Naive thymus-derived CD4-positive, alpha-beta T cell (primary cell): ENCODE measurements at regions of chr11 and their contacts with region 1.

Region 1: GRCh38 chr11:64778508-64779346 is at the start of gene SF1:
- DNase-seq: peak; percentile 86 to 100 (median 100)
- ATAC-seq: peak; percentile 89
- H3K4me3 ChIP-seq: peak within 1 kb of the TSS; percentile 94
- H3K4me3 Mint-ChIP-seq: peak within 1 kb of the TSS; percentile 90 to 97 (median 94)
- H3K27ac ChIP-seq: peak within 1 kb of the TSS; percentile 99
- H3K27ac Mint-ChIP-seq: peak within 1 kb of the TSS; percentile 98 to 100 (median 99)
- H3K4me1 ChIP-seq: peaks cover 48 to 52% of the 10 kb centered on the region in 2 donors
- H3K4me1 Mint-ChIP-seq: peaks cover 51 to 71% (median 64%) of the 10 kb centered on the region in 7 donors
- H3K27me3 ChIP-seq: no peaks in the 10 kb centered on the region
- H3K27me3 Mint-ChIP-seq: peaks cover 0 to 5% (median 0%) of the 10 kb centered on the region in 5 donors
- total RNA-seq, gene SF1: 462 to 1,612 (median 904) TPM

Region 2: DNA sequence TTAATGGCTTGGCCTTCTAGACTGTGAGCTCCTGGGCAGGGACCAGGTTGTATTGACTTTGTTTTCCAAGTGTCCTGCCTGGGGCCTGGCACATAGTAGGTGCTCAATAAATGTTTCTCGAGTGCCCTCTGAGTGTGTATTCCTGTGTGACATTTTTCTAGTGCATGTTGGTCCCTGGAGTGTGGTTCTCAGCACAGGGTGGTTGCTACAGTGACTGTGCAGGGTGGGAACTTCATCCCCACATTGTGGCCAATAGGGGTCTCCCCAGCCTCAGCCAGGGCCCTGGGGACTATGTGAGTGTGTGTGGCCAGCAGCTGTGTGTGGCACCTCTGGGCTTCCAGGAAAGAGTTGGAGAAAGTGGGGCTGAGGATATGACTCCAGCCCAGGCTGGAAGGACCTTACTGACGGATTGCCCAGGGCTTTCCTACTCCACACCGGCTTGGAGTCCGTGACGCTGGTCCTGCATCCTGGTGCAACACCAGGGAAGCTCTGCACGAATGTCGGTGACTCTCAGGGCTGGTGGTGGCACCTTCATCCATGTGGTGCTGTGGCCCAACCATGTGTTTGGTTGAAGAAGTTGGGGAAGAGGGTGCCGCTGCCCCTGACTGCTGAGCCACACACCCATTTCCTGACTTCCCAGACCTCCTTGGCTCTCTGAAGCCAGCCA is 948.8 kb before region 1 on chr11:
- CTCF ChIA-PET with region 1: no interaction called
- POLR2A ChIA-PET with region 1: no interaction called
- intact Hi-C with region 1: no loop called
- DNase-seq: no peak
- ATAC-seq: no peak
- H3K4me3 ChIP-seq: no peak overlapping the region
- H3K4me3 Mint-ChIP-seq: no peak overlapping the region
- H3K27ac ChIP-seq: no peak overlapping the region
- H3K27ac Mint-ChIP-seq: no peak overlapping the region
- H3K4me1 ChIP-seq: no peaks in the 10 kb centered on the region
- H3K4me1 Mint-ChIP-seq: peaks cover 0 to 6% (median 0%) of the 10 kb centered on the region in 7 donors
- H3K27me3 ChIP-seq: no peaks in the 10 kb centered on the region
- H3K27me3 Mint-ChIP-seq: no peaks in the 10 kb centered on the region

Region 3: DNA sequence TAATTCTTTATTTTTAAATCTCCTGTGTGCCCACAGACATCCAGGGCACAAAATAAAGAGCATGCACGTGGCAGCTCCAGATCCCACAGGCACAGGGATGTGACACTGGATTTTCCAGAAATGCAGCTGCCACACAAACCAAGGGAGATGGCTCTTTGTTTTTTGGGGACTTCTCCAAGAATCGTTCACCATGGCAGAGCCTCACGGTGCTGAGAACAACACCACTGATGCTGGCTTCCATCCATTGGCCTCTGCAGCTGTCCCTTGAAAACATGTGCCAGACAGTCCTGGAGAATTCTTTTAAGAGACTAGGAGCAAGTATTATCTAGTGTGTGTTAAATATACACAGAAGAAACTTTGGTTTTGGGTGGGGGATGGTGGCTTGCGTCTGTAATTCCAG is 296.1 kb before region 1 on chr11:
- CTCF ChIA-PET with region 1: no interaction called
- POLR2A ChIA-PET with region 1: no interaction called
- intact Hi-C with region 1: no loop called
- DNase-seq: no peak
- ATAC-seq: no peak
- H3K4me3 ChIP-seq: no peak overlapping the region
- H3K4me3 Mint-ChIP-seq: no peak overlapping the region
- H3K27ac ChIP-seq: no peak overlapping the region
- H3K27ac Mint-ChIP-seq: no peak overlapping the region
- H3K4me1 ChIP-seq: no peaks in the 10 kb centered on the region
- H3K4me1 Mint-ChIP-seq: no peaks in the 10 kb centered on the region
- H3K27me3 ChIP-seq: no peaks in the 10 kb centered on the region
- H3K27me3 Mint-ChIP-seq: peaks cover 9 to 25% (median 22%) of the 10 kb centered on the region in 5 donors

Region 4: GRCh38 chr11:64593156-64594105 is 185.3 kb before region 1 on chr11:
- CTCF ChIA-PET with region 1: no interaction called
- POLR2A ChIA-PET with region 1: no interaction called
- intact Hi-C with region 1: no loop called
- DNase-seq: no peak
- ATAC-seq: no peak
- H3K4me3 ChIP-seq: no peak overlapping the region
- H3K4me3 Mint-ChIP-seq: no peak overlapping the region
- H3K27ac ChIP-seq: no peak overlapping the region
- H3K27ac Mint-ChIP-seq: no peak overlapping the region
- H3K4me1 ChIP-seq: no peaks in the 10 kb centered on the region
- H3K4me1 Mint-ChIP-seq: no peaks in the 10 kb centered on the region
- H3K27me3 ChIP-seq: no peaks in the 10 kb centered on the region
- H3K27me3 Mint-ChIP-seq: peaks cover 0 to 5% (median 3%) of the 10 kb centered on the region in 5 donors

Region 5: GRCh38 chr11:64742889-64743590 is 35.7 kb before region 1 on chr11:
- CTCF ChIA-PET with region 1: interaction called, 305 read pairs
- POLR2A ChIA-PET with region 1: interaction called, 1,956 read pairs
- intact Hi-C with region 1: loop called (anchors 1 kb)
- DNase-seq: peak; percentile 60 to 91 (median 78)
- ATAC-seq: peak; percentile 45
- H3K4me3 ChIP-seq: peak overlapping the region; percentile 98
- H3K4me3 Mint-ChIP-seq: peak overlapping the region in 9 of 10 donors; percentile 89 to 99 (median 97)
- H3K27ac ChIP-seq: peak overlapping the region; percentile 97
- H3K27ac Mint-ChIP-seq: peak overlapping the region in 5 of 9 donors; percentile 88 to 100 (median 98)
- H3K4me1 ChIP-seq: peaks cover 9 to 16% of the 10 kb centered on the region in 2 donors
- H3K4me1 Mint-ChIP-seq: peaks cover 18 to 47% (median 39%) of the 10 kb centered on the region in 7 donors
- H3K27me3 ChIP-seq: no peaks in the 10 kb centered on the region
- H3K27me3 Mint-ChIP-seq: no peaks in the 10 kb centered on the region

Region 6: GRCh38 chr11:64803163-64803845 is 24.6 kb after region 1 on chr11 and contains the start of gene MAP4K2:
- CTCF ChIA-PET with region 1: interaction called, 4 read pairs
- POLR2A ChIA-PET with region 1: interaction called, 125 read pairs
- intact Hi-C with region 1: loop called (anchors 1 kb)
- DNase-seq: peak; percentile 80 to 96 (median 87)
- ATAC-seq: peak; percentile 98
- H3K4me3 ChIP-seq: peak within 1 kb of the TSS; percentile 91
- H3K4me3 Mint-ChIP-seq: peak within 1 kb of the TSS; percentile 85 to 92 (median 88)
- H3K27ac ChIP-seq: peak within 1 kb of the TSS; percentile 98
- H3K27ac Mint-ChIP-seq: peak within 1 kb of the TSS; percentile 82 to 97 (median 95)
- H3K4me1 ChIP-seq: peaks cover 9 to 23% of the 10 kb centered on the region in 2 donors
- H3K4me1 Mint-ChIP-seq: peaks cover 27 to 43% (median 32%) of the 10 kb centered on the region in 7 donors
- H3K27me3 ChIP-seq: no peaks in the 10 kb centered on the region
- H3K27me3 Mint-ChIP-seq: no peaks in the 10 kb centered on the region
- total RNA-seq, gene MAP4K2: 75.2 to 130 (median 84.3) TPM

Region 7: DNA sequence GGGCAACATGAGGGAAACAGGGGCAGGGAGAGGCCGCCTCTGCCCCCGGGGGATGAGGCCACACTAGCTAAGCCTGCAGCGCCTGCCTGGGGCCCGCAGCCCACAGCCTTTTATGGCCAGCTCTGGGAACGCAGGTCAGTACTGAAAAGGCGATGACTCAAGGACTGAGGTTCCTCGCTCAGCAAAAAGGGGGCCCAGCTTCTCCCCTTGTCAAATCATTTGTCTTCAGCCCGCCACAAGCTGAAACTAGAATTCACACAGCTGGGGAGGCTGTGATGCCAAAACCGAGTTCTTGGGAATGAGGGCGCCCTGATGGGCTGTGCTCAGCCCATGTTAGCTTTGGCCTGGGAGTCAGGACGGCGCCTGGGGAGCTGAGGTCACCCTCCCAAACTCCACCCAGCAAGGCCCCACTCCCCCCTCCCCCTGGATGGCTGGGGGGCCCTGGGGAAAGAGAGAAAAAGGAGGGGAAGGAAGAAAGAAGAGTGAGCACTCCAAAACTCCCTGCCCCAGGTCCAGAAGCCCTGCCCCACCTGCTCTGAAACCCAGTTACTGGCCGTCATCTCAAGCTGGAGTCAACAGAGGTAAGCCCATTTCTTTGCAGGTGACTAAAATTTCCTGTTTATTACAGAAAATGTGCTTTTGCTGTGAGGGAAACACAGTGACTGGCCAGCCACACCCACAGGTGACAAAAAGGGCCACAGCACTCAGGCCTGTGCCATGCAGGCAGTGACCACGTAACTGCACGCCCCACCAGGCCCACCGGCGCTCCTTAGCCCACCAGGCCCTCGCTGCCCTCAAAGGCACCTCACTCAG is 86.0 kb after region 1 on chr11:
- CTCF ChIA-PET with region 1: no interaction called
- POLR2A ChIA-PET with region 1: interaction called, 21 read pairs
- intact Hi-C with region 1: no loop called
- DNase-seq: peak in 1 of 9 donors; percentile 63
- ATAC-seq: no peak
- H3K4me3 ChIP-seq: peak overlapping the region; percentile 45
- H3K4me3 Mint-ChIP-seq: peak overlapping the region; percentile 45 to 91 (median 78)
- H3K27ac ChIP-seq: peak overlapping the region; percentile 76
- H3K27ac Mint-ChIP-seq: peak overlapping the region; percentile 89 to 98 (median 96)
- H3K4me1 ChIP-seq: peaks cover 86 to 98% of the 10 kb centered on the region in 2 donors
- H3K4me1 Mint-ChIP-seq: peaks cover 68 to 94% (median 82%) of the 10 kb centered on the region in 7 donors
- H3K27me3 ChIP-seq: no peaks in the 10 kb centered on the region
- H3K27me3 Mint-ChIP-seq: no peaks in the 10 kb centered on the region

Region 8: DNA sequence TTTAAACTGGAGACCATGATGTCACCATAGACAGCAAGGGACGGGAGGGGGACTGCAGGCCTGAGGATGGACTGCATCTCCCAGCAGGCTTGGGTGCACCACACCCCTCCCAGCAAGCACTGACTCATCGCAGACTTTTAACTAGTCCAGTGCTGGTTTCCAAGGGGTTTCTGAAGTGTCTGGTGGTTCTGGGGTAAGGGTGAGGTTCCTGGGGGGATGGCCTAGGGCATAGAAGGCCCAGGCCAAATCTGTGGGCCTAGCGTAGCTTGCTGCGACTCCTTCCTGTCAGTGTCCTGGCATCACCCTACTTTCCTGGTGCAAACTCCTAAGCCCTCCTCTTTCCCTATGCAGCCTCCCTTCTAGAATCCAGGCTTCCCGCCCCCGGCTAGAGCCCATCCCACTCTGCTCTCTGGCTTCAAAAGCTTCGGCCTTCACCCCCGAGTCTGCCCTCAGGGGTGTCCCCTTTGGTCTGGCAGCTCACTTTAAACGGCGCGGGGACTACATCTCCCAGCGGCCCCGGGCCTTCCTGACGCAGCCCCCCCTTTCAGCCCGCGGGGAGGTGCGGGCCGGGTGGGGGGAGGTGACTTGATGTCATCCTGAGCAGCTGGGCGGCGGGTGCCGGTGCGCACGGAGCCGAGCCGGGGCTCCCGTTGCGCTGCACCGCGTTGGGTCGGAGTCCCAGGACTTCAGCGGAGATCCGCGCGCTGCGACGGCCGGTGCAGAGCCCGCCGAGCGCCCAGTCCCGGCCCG is 145.6 kb after region 1 on chr11 and contains the start of gene PPP2R5B:
- CTCF ChIA-PET with region 1: interaction called, 3 read pairs
- POLR2A ChIA-PET with region 1: interaction called, 10 read pairs
- intact Hi-C with region 1: loop called in 1 of 2 experiments (anchors 1 kb)
- DNase-seq: peak; percentile 79 to 92 (median 89)
- ATAC-seq: peak; percentile 95
- H3K4me3 ChIP-seq: peak within 1 kb of the TSS; percentile 67
- H3K4me3 Mint-ChIP-seq: peak within 1 kb of the TSS; percentile 89 to 99 (median 96)
- H3K27ac ChIP-seq: peak within 1 kb of the TSS; percentile 81
- H3K27ac Mint-ChIP-seq: peak within 1 kb of the TSS; percentile 95 to 100 (median 98)
- H3K4me1 ChIP-seq: peaks cover 11 to 15% of the 10 kb centered on the region in 2 donors
- H3K4me1 Mint-ChIP-seq: peaks cover 9 to 24% (median 14%) of the 10 kb centered on the region in 7 donors
- H3K27me3 ChIP-seq: no peaks in the 10 kb centered on the region
- H3K27me3 Mint-ChIP-seq: no peaks in the 10 kb centered on the region
- total RNA-seq, gene PPP2R5B: 11.9 to 19.1 (median 18.8) TPM

Region 9: GRCh38 chr11:65418711-65419459 is 640.2 kb after region 1 on chr11:
- CTCF ChIA-PET with region 1: no interaction called
- POLR2A ChIA-PET with region 1: no interaction called
- intact Hi-C with region 1: loop called in 1 of 2 experiments (anchors 10 kb)
- DNase-seq: peak; percentile 33 to 89 (median 48)
- ATAC-seq: peak; percentile 51
- H3K4me3 ChIP-seq: peak overlapping the region; percentile 82
- H3K4me3 Mint-ChIP-seq: peak overlapping the region; percentile 92 to 100 (median 97)
- H3K27ac ChIP-seq: peak overlapping the region; percentile 98
- H3K27ac Mint-ChIP-seq: peak overlapping the region; percentile 97 to 100 (median 99)
- H3K4me1 ChIP-seq: peaks cover 36 to 46% of the 10 kb centered on the region in 2 donors
- H3K4me1 Mint-ChIP-seq: peaks cover 36 to 65% (median 45%) of the 10 kb centered on the region in 7 donors
- H3K27me3 ChIP-seq: no peaks in the 10 kb centered on the region
- H3K27me3 Mint-ChIP-seq: peaks cover 0 to 15% (median 0%) of the 10 kb centered on the region in 5 donors